Dendritic cell treated with granulocyte-macrophage colony-stimulating factor and Interleukin-4, amounts not matched to agents 40 ng/mL and 50 ng/mL, for 4 days (primary cell): ENCODE measurements at regions of chr20 and their contacts with region 1.

Region 1: DNA sequence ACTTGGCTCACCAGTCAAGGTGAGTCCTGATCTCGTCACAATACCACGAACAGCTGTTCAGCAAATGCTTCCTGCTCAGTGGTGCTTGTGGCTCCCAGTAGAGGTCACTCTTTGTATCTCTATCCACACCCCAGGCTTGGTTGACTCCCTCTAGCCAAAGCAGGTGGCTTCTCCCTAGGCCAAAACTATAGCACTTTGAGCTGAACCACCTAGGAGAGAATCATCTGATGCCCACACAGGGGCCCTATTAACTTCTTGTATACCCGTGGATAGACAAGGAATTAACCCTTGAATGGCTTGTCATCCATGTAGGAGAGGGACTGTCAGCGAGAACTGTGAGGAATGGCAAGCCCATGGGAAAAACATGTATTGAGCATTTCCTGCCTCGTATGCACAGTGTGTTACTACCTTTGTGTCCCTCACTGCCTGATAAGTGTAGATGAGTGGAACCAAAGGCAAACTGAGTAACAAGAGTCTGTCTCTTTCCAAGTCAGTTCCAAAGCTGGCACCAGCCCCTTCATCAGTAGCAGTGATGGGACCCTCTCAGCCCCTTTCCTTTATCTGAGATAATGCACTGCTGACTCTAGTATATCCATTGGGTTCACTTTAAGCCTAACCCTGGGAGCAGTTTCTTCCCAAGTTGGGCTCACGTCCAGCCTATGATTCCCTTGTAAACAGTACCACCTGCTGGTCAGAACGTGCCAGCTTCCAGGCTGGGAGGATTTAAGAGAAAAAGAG is 42.5 kb downstream of the EIF2S2 start:
- H3K4me3 Mint-ChIP-seq: no peak overlapping the region
- H3K27ac Mint-ChIP-seq: no peak overlapping the region
- H3K4me1 Mint-ChIP-seq: peaks cover 11% of the 10 kb centered on the region
- H3K27me3 Mint-ChIP-seq: no peaks in the 10 kb centered on the region

Region 2: GRCh38 chr20:33791959-33792597 is 277.4 kb before region 1 on chr20:
- intact Hi-C with region 1: loop called (anchors 10 kb)
- H3K4me3 Mint-ChIP-seq: no peak overlapping the region
- H3K27ac Mint-ChIP-seq: no peak overlapping the region
- H3K4me1 Mint-ChIP-seq: peaks cover 17% of the 10 kb centered on the region
- H3K27me3 Mint-ChIP-seq: no peaks in the 10 kb centered on the region

Region 3: DNA sequence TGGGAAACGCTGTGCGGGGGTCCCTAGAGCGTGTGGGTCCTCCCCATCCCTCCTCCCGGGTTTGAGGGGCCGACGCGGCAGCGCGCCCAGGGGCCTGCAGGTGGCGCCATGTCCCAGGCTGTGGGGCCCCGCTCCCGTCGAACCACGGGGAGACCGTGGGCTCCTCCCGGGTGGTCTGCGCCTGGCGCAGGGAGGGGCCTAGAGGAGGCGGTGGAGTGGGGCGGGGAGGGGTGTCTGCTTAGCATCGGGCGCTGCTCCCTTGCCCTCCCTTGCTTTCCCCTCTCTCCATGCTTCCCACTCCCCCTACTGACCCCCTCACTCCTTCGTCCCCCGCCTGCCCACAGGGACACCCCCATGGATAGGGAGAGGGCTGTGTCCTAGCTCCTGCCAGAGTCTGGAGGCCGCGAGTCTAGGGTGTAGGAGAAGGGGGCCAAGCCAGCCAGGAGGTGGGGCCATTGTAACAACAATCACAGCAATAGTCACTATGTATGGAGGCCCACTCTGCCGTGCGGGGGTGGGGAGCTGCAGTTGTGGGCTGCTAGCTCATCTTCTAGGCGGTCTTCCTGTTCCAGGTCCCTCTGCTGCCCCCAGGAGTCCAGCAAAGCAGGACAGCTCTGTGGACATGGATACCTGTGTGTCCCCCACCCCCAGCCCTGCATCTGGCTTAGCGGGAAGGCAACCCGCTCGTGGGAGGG is 206.7 kb before region 1 on chr20:
- intact Hi-C with region 1: loop called (anchors 2 kb)
- H3K4me3 Mint-ChIP-seq: no peak overlapping the region
- H3K27ac Mint-ChIP-seq: no peak overlapping the region
- H3K4me1 Mint-ChIP-seq: peaks cover 16% of the 10 kb centered on the region
- H3K27me3 Mint-ChIP-seq: no peaks in the 10 kb centered on the region

Region 4: GRCh38 chr20:33915726-33916331 is 153.7 kb before region 1 on chr20:
- intact Hi-C with region 1: loop called (anchors 5 kb)
- H3K4me3 Mint-ChIP-seq: no peak overlapping the region
- H3K27ac Mint-ChIP-seq: no peak overlapping the region
- H3K4me1 Mint-ChIP-seq: peaks cover 13% of the 10 kb centered on the region
- H3K27me3 Mint-ChIP-seq: peaks cover 4% of the 10 kb centered on the region

Region 5: GRCh38 chr20:33933469-33933909 is 136.0 kb before region 1 on chr20:
- intact Hi-C with region 1: loop called (anchors 1 kb)
- H3K4me3 Mint-ChIP-seq: no peak overlapping the region
- H3K27ac Mint-ChIP-seq: peak overlapping the region; percentile 27
- H3K4me1 Mint-ChIP-seq: peaks cover 5% of the 10 kb centered on the region
- H3K27me3 Mint-ChIP-seq: peaks cover 3% of the 10 kb centered on the region

Region 6: GRCh38 chr20:34129518-34130162 is 60.1 kb after region 1 on chr20:
- intact Hi-C with region 1: loop called (anchors 1 kb)
- H3K4me3 Mint-ChIP-seq: no peak overlapping the region
- H3K27ac Mint-ChIP-seq: no peak overlapping the region
- H3K4me1 Mint-ChIP-seq: peaks cover 5% of the 10 kb centered on the region
- H3K27me3 Mint-ChIP-seq: peaks cover 18% of the 10 kb centered on the region

Region 7: GRCh38 chr20:34222208-34222607 is 152.7 kb after region 1 on chr20:
- intact Hi-C with region 1: no loop called
- H3K4me3 Mint-ChIP-seq: no peak overlapping the region
- H3K27ac Mint-ChIP-seq: no peak overlapping the region
- H3K4me1 Mint-ChIP-seq: peaks cover 26% of the 10 kb centered on the region
- H3K27me3 Mint-ChIP-seq: peaks cover 27% of the 10 kb centered on the region